CD4-positive, alpha-beta T cell (primary cell): ENCODE measurements at regions of chr20 and their contacts with region 1.

Region 1: DNA sequence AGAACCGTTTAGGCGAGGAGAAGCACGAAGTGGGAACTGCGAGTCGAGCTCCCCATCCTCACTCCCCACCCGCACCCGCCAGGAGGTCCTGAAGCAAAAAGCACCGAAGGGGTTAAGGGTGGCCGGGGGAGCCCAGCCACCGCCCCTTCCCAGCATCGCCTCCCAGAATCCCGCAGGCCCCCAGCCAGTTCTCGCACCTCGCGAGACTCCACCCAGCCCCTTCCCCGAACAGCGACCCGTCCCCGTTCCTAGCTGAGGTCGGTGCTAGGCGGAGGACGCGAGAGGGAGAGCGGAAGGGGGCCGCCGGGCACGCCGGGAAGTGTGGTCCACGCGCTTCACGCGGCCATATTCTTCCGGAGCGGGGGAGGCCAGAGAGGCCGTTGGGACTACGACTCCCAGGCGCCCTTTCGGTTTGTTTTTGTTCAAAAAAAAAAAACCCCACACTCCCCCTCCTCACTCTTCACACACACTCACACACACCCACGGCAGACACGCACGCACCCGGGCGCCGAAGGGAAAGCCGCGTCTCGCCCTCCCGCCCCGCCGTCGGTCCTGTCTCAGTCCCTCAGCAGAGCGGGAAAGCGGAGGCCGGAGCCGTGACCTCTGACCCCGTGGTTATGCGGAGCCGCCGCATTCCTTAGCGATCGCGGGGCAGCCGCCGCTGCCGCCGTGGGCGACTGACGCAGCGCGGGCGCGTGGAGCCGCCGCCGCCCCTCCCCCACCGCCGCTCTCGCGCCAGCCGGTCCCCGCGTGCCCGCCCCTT is at the start of gene ASXL1:
- DNase-seq: peak; percentile 87 to 97 (median 92)
- ATAC-seq: peak; percentile 91
- H3K4me3 ChIP-seq: peak within 1 kb of the TSS; percentile 95
- H3K4me3 Mint-ChIP-seq: peak within 1 kb of the TSS; percentile 96
- H3K27ac ChIP-seq: peak within 1 kb of the TSS; percentile 96 to 97
- H3K27ac Mint-ChIP-seq: peak within 1 kb of the TSS; percentile 99
- H3K4me1 ChIP-seq: peaks cover 38% of the 10 kb centered on the region
- H3K4me1 Mint-ChIP-seq: peaks cover 51% of the 10 kb centered on the region
- H3K27me3 ChIP-seq: no peaks in the 10 kb centered on the region
- H3K27me3 Mint-ChIP-seq: no peaks in the 10 kb centered on the region
- CTCF ChIP-seq: no peak
- total RNA-seq, gene ASXL1: 213 to 222 TPM

Region 2: GRCh38 chr20:32207626-32208498 is 150.2 kb before region 1 on chr20 and contains the starts of genes PLAGL2 and POFUT1:
- CTCF ChIA-PET with region 1: interaction called, 3 read pairs
- POLR2A ChIA-PET with region 1: no interaction called
- intact Hi-C with region 1: loop called in 1 of 2 experiments (anchors 2 kb)
- DNase-seq: peak; percentile 74 to 95 (median 87)
- ATAC-seq: peak; percentile 95
- H3K4me3 ChIP-seq: peak within 1 kb of the TSS; percentile 94
- H3K4me3 Mint-ChIP-seq: peak within 1 kb of the TSS; percentile 96
- H3K27ac ChIP-seq: peak within 1 kb of the TSS; percentile 50 to 60
- H3K27ac Mint-ChIP-seq: peak within 1 kb of the TSS; percentile 92
- H3K4me1 ChIP-seq: peaks cover 66% of the 10 kb centered on the region
- H3K4me1 Mint-ChIP-seq: peaks cover 79% of the 10 kb centered on the region
- H3K27me3 ChIP-seq: no peaks in the 10 kb centered on the region
- H3K27me3 Mint-ChIP-seq: no peaks in the 10 kb centered on the region
- CTCF ChIP-seq: no peak
- total RNA-seq, gene PLAGL2: 15.6 to 16.9 TPM
- total RNA-seq, gene POFUT1: 7.5 to 8.8 TPM

Region 3: DNA sequence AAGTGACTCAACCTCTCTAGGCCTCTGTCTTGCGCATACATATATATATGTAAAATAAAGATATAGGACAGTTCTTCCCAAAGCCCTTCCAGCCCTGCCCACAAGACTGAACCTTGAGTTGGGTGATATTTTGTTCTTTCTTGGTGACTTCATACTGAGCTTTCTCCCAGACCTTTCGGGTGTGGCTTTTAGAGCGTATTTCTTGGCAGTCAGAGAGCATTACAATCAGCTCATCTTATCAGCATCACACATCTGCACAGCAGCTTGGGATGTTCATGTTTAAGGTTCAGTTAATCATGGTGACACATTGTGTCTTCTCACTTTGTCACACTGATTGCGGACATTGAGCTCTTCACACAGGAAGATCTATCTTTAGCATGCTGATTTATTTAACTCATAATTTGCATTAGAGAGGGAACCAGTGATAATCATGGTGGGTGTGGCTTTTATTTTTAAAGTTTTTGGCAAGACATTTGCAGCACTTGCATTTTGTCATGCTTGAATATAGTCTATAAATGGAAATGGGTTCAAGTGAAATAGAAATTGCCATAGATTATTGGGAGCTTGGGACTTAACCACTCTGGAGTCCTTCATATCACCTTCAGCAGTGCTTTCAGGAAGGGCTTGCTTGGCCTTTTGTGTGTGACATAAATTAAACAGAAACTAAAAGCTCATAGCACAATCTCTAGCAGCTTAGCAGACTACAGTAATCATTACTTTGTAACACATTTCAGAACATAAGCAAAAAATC is 72.3 kb before region 1 on chr20:
- CTCF ChIA-PET with region 1: no interaction called
- POLR2A ChIA-PET with region 1: interaction called, 3 read pairs
- intact Hi-C with region 1: loop called in 1 of 2 experiments (anchors 10 kb)
- DNase-seq: peak in 9 of 14 experiments; percentile 2 to 77 (median 12)
- ATAC-seq: peak; percentile 78
- H3K4me3 ChIP-seq: peak overlapping the region; percentile 1
- H3K4me3 Mint-ChIP-seq: peak overlapping the region; percentile 26
- H3K27ac ChIP-seq: peak overlapping the region; percentile 32 to 57
- H3K27ac Mint-ChIP-seq: peak overlapping the region; percentile 74
- H3K4me1 ChIP-seq: peaks cover 25% of the 10 kb centered on the region
- H3K4me1 Mint-ChIP-seq: peaks cover 37% of the 10 kb centered on the region
- H3K27me3 ChIP-seq: no peaks in the 10 kb centered on the region
- H3K27me3 Mint-ChIP-seq: no peaks in the 10 kb centered on the region
- CTCF ChIP-seq: no peak

Region 4: DNA sequence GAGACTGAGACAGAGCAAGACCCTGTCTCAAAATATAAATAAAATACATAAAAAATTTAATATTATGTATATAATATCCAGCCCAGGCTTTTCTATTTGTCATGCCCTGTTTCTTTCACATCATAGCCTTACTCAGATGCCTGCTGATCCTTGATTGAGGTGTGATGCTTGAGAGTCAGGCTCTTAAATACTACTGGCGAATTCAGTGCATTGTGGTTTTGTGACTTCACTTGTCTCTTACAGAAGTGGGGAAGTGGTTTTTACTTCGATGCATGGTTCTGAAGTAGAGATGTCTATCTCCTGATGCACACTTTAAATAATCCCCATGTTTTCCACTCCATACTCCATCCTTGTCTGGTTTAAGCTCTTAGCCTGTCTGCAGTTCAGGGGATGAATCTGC is 29.2 kb after region 1 on chr20:
- CTCF ChIA-PET with region 1: no interaction called
- POLR2A ChIA-PET with region 1: interaction called, 3 read pairs
- intact Hi-C with region 1: loop called in 1 of 2 experiments (anchors 2 kb)
- DNase-seq: peak in 8 of 14 experiments; percentile 4 to 86 (median 50)
- ATAC-seq: peak; percentile 96
- H3K4me3 ChIP-seq: no peak overlapping the region
- H3K4me3 Mint-ChIP-seq: peak overlapping the region; percentile 36
- H3K27ac ChIP-seq: peak overlapping the region in 1 of 2 donors; percentile 15
- H3K27ac Mint-ChIP-seq: peak overlapping the region; percentile 82
- H3K4me1 ChIP-seq: peaks cover 32% of the 10 kb centered on the region
- H3K4me1 Mint-ChIP-seq: peaks cover 82% of the 10 kb centered on the region
- H3K27me3 ChIP-seq: no peaks in the 10 kb centered on the region
- H3K27me3 Mint-ChIP-seq: no peaks in the 10 kb centered on the region
- CTCF ChIP-seq: no peak

Region 5: GRCh38 chr20:32484958-32485769 is 127.1 kb after region 1 on chr20:
- CTCF ChIA-PET with region 1: interaction called, 7 read pairs
- POLR2A ChIA-PET with region 1: interaction called, 11 read pairs
- intact Hi-C with region 1: loop called (anchors 1 to 2 kb)
- DNase-seq: peak; percentile 71 to 93 (median 84)
- ATAC-seq: peak; percentile 81
- H3K4me3 ChIP-seq: peak overlapping the region; percentile 75
- H3K4me3 Mint-ChIP-seq: peak overlapping the region; percentile 97
- H3K27ac ChIP-seq: peak overlapping the region; percentile 44 to 61
- H3K27ac Mint-ChIP-seq: peak overlapping the region; percentile 88
- H3K4me1 ChIP-seq: peaks cover 54% of the 10 kb centered on the region
- H3K4me1 Mint-ChIP-seq: peaks cover 54% of the 10 kb centered on the region
- H3K27me3 ChIP-seq: no peaks in the 10 kb centered on the region
- H3K27me3 Mint-ChIP-seq: no peaks in the 10 kb centered on the region
- CTCF ChIP-seq: peak; percentile 78

Region 6: DNA sequence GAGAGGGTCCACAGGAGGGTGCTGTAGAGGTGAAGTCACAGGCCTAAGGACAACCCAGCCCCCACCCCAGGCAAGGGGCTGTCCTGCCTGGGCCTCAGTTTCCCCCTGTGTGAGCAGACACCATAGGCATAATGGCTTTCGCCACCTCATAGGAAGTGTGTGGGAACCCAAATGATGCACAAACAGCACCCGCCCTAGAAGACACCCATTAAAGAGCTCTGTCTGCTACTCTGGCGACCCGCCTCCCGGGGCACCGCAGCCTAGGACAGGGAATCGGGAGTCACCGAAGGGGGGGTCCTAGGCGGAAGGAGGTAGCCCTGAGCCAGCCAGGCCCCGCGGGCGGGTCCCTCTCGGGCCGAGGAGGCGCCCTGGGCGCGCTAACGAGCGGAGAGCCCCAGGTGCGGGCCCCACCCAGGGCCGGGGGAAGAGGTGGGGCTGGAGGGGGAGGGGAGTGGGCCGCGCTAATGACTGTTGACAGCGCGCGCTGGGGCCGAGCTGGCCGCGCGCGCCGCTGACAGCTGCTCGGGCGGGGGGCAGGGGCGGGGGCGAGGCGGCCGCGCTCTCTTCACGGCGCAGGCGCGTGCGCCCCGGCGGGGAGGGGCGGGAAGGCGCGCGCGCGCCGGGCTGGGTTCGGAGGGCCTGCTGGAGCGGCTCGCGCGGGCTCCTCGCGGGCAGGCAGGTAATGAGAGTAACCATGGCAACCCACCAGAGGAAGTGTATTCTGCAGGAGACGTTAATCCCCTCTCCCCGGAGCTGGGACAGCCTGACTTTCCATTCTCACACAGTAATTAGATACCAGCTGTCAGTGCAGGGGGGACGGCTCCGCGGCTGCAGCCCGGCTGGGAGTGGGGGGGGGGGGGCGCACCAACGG is 178.1 kb after region 1 on chr20:
- CTCF ChIA-PET with region 1: no interaction called
- POLR2A ChIA-PET with region 1: interaction called, 10 read pairs
- intact Hi-C with region 1: no loop called
- DNase-seq: peak; percentile 65 to 95 (median 80)
- ATAC-seq: peak; percentile 39
- H3K4me3 ChIP-seq: peak overlapping the region; percentile 54
- H3K4me3 Mint-ChIP-seq: peak overlapping the region; percentile 87
- H3K27ac ChIP-seq: peak overlapping the region; percentile 84 to 91
- H3K27ac Mint-ChIP-seq: peak overlapping the region; percentile 99
- H3K4me1 ChIP-seq: peaks cover 92% of the 10 kb centered on the region
- H3K4me1 Mint-ChIP-seq: peaks cover 88% of the 10 kb centered on the region
- H3K27me3 ChIP-seq: no peaks in the 10 kb centered on the region
- H3K27me3 Mint-ChIP-seq: no peaks in the 10 kb centered on the region
- CTCF ChIP-seq: no peak